ENCODE measurements at regions of chr15 and their contacts with region 1.

Region 1: DNA sequence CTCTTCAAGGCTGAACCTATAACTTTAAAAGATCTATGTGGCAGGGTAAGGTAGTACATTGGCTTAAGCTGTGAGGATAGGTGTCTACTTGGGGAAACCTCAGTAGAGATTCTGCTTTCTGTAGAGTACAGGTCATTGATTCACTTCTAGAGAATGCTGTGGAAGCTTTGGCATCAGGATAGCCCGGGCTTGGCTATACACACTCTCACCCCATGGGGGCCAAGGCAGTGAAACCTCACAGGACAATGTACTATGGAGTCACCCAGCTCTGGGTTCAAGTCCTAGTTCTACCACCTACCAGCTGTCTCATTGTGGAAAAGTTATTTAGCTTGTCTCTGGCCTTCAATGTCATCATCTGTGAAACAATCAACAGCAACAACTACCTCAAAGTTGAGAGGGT is 9.0 kb downstream of the MTFMT start:
- DNase-seq: no peak

Region 2: GRCh38 chr15:63970621-63971426 is 1049.6 kb before region 1 on chr15:
- intact Hi-C with region 1: no loop called
- DNase-seq: no peak

Region 3: GRCh38 chr15:64851503-64851840 is 168.9 kb before region 1 on chr15:
- intact Hi-C with region 1: loop called in 1 of 2 experiments (anchors 5 kb)
- DNase-seq: no peak

Measured in posterior vena cava (tissue), 2 donors.